PC-9 (cell line): ENCODE measurements at regions of chr6 and their contacts with region 1.

Region 1: GRCh38 chr6:142885182-142885867 is 59.7 kb downstream of the HIVEP2 start:
- DNase-seq: peak; percentile 82 to 99
- H3K4me3 ChIP-seq: peak overlapping the region; percentile 19; the same call in 1 of the 2 replicates
- H3K27ac ChIP-seq: peak overlapping the region; percentile 74
- H3K4me1 ChIP-seq: peaks cover 41% of the 10 kb centered on the region
- H3K27me3 ChIP-seq: no peaks in the 10 kb centered on the region
- CTCF ChIP-seq: no peak

Region 2: DNA sequence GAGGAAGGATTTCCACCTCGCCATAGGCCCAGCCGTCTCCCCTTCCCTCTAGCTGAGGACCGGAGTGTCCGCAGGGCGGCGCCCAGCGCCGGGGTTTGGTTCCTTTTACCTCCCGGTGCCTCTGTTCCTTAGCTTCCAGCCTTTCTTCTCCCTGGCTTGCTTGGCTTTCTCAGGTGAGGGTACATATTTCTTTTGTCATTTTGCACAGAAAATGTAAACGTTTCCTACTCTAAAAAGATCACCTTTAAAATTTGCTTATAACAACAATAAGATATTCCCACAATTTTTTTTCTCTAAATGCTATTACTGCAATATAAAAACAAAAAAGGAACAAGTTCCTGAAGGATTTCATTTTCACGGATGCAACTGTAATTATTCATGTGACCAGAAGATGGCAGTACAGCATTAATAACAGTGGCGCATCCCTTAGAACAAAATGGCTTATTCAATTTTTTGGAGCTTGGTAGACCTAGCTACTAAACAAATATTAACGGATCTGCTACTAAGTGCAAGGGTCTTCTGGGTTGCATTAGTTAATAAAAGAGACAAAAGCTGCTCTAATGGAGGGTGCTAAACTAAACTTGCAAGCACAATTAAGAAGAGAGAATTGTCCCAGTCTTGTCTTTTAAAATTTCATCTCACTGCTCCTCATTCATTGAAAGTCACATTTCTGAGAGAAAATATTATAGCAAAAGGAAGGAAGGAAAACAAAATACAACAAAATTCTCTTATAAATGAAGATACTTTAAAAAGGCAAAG is 410.6 kb before region 1 on chr6:
- CTCF ChIA-PET with region 1: no interaction called
- POLR2A ChIA-PET with region 1: no interaction called
- intact Hi-C with region 1: loop called (anchors 1 kb)
- DNase-seq: peak; percentile 58 to 71
- H3K4me3 ChIP-seq: peak overlapping the region; percentile 38; the same call in 1 of the 2 replicates
- H3K27ac ChIP-seq: no peak overlapping the region
- H3K4me1 ChIP-seq: no peaks in the 10 kb centered on the region
- H3K27me3 ChIP-seq: no peaks in the 10 kb centered on the region
- CTCF ChIP-seq: peak; percentile 91

Region 3: GRCh38 chr6:142756215-142756634 is 129.1 kb before region 1 on chr6:
- CTCF ChIA-PET with region 1: no interaction called
- POLR2A ChIA-PET with region 1: no interaction called
- intact Hi-C with region 1: loop called (anchors 1 kb)
- DNase-seq: peak; percentile 86 to 97
- H3K4me3 ChIP-seq: no peak overlapping the region
- H3K27ac ChIP-seq: peak overlapping the region; percentile 54
- H3K4me1 ChIP-seq: peaks cover 22% of the 10 kb centered on the region
- H3K27me3 ChIP-seq: no peaks in the 10 kb centered on the region
- CTCF ChIP-seq: 0 out of 2 replicates have a peak, but pooled peaks have one; percentile 22

Region 4: GRCh38 chr6:142857233-142857761 is 28.0 kb before region 1 on chr6:
- CTCF ChIA-PET with region 1: no interaction called
- POLR2A ChIA-PET with region 1: interaction called, 73 read pairs
- intact Hi-C with region 1: loop called (anchors 1 kb)
- DNase-seq: no peak
- H3K4me3 ChIP-seq: no peak overlapping the region
- H3K27ac ChIP-seq: no peak overlapping the region
- H3K4me1 ChIP-seq: peaks cover 34% of the 10 kb centered on the region
- H3K27me3 ChIP-seq: no peaks in the 10 kb centered on the region
- CTCF ChIP-seq: no peak

Region 5: GRCh38 chr6:142946181-142946923 is 61.0 kb after region 1 on chr6:
- CTCF ChIA-PET with region 1: interaction called, 4 read pairs
- POLR2A ChIA-PET with region 1: interaction called, 6 read pairs
- intact Hi-C with region 1: loop called (anchors 1 kb)
- DNase-seq: peak; percentile 91 to 96
- H3K4me3 ChIP-seq: peak overlapping the region; percentile 89
- H3K27ac ChIP-seq: peak overlapping the region; percentile 90
- H3K4me1 ChIP-seq: peaks cover 36% of the 10 kb centered on the region
- H3K27me3 ChIP-seq: no peaks in the 10 kb centered on the region
- CTCF ChIP-seq: no peak

Region 6: GRCh38 chr6:143187238-143187923 is 302.1 kb after region 1 on chr6:
- CTCF ChIA-PET with region 1: no interaction called
- POLR2A ChIA-PET with region 1: no interaction called
- intact Hi-C with region 1: no loop called
- DNase-seq: peak in 1 of 2 experiments; percentile 53
- H3K4me3 ChIP-seq: no peak overlapping the region
- H3K27ac ChIP-seq: no peak overlapping the region
- H3K4me1 ChIP-seq: no peaks in the 10 kb centered on the region
- H3K27me3 ChIP-seq: no peaks in the 10 kb centered on the region
- CTCF ChIP-seq: no peak

Region 7: GRCh38 chr6:143427109-143427817 is 541.9 kb after region 1 on chr6:
- CTCF ChIA-PET with region 1: no interaction called
- POLR2A ChIA-PET with region 1: no interaction called
- intact Hi-C with region 1: loop called (anchors 1 kb)
- DNase-seq: peak; percentile 80 to 86
- H3K4me3 ChIP-seq: no peak overlapping the region
- H3K27ac ChIP-seq: no peak overlapping the region
- H3K4me1 ChIP-seq: peaks cover 7% of the 10 kb centered on the region
- H3K27me3 ChIP-seq: no peaks in the 10 kb centered on the region
- CTCF ChIP-seq: peak; percentile 96

Region 8: GRCh38 chr6:143478479-143479062 is 593.2 kb after region 1 on chr6:
- CTCF ChIA-PET with region 1: no interaction called
- POLR2A ChIA-PET with region 1: no interaction called
- intact Hi-C with region 1: no loop called
- DNase-seq: no peak
- H3K4me3 ChIP-seq: no peak overlapping the region
- H3K27ac ChIP-seq: no peak overlapping the region
- H3K4me1 ChIP-seq: no peaks in the 10 kb centered on the region
- H3K27me3 ChIP-seq: no peaks in the 10 kb centered on the region
- CTCF ChIP-seq: no peak